AG04450 (cell line): ENCODE measurements at regions of chr4 and their contacts with region 1.

Region 1: DNA sequence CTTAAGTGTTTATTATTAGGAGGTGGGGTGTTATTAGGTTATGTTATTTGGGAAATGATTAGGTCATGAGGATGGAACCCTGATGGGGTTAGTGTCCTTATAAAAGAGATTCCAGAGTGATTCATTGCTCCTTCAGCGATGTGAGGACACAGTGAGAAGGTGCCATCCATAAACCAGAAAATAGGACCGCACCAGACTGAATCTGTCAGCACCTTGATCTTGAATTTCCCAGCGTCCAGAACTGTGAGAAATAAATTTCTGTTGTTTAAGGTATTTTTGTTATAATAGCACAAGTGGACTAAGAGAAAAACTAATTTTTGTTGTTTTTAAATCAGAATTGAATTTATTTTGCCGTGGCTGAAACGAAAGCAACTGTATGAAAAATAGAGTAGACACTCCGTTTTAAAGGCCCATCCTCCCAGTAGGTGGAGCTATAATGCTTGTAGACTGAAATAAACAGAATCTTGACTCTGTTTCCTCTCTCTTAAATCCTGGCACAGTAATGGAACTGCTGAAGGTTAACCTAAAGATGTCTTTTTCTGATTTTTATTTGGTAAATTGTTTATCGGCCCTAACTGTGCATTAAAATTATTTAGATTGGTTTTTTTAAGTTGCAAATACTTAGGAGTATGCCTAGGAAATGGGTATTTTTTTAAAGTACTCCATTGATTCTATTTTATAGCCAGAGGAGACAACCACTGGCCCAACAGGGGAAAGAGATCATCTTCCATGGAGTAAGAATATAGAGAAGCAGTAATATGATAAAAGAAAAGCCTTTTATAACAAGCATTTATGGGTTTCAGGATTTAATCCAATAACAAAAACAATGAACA is 133.2 kb upstream of the ADAMTS3 start:
- DNase-seq: peak; percentile 10
- H3K4me3 ChIP-seq: peak overlapping the region; percentile 53
- H3K27ac ChIP-seq: no peak overlapping the region
- H3K27me3 ChIP-seq: no peaks in the 10 kb centered on the region
- CTCF ChIP-seq: peak; percentile 76

Region 2: GRCh38 chr4:72712997-72713396 is 10.8 kb after region 1 on chr4:
- CTCF ChIA-PET with region 1: no interaction called
- POLR2A ChIA-PET with region 1: no interaction called
- DNase-seq: no peak
- H3K4me3 ChIP-seq: no peak overlapping the region
- H3K27ac ChIP-seq: no peak overlapping the region
- H3K27me3 ChIP-seq: no peaks in the 10 kb centered on the region
- CTCF ChIP-seq: no peak

Region 3: GRCh38 chr4:72886602-72887001 is 184.4 kb after region 1 on chr4:
- CTCF ChIA-PET with region 1: no interaction called
- POLR2A ChIA-PET with region 1: no interaction called
- DNase-seq: no peak
- H3K4me3 ChIP-seq: no peak overlapping the region
- H3K27ac ChIP-seq: no peak overlapping the region
- H3K27me3 ChIP-seq: no peaks in the 10 kb centered on the region
- CTCF ChIP-seq: peak; percentile 42

Region 4: GRCh38 chr4:73019462-73020047 is 317.4 kb after region 1 on chr4:
- CTCF ChIA-PET with region 1: interaction called, 14 read pairs
- POLR2A ChIA-PET with region 1: no interaction called
- DNase-seq: peak; percentile 7
- H3K4me3 ChIP-seq: no peak overlapping the region
- H3K27ac ChIP-seq: no peak overlapping the region
- H3K27me3 ChIP-seq: peaks cover 5% of the 10 kb centered on the region
- CTCF ChIP-seq: peak; percentile 66